T-cell (primary cell): ENCODE measurements at regions of chr12 and their contacts with region 1.

Region 1: GRCh38 chr12:115335594-115335993 is 651.6 kb upstream of the TBX3 start:
- DNase-seq: no peak
- ATAC-seq: no peak
- H3K4me3 ChIP-seq: no peak overlapping the region
- H3K4me3 Mint-ChIP-seq: no peak overlapping the region
- H3K27ac ChIP-seq: no peak overlapping the region
- H3K27ac Mint-ChIP-seq: no peak overlapping the region
- H3K4me1 ChIP-seq: no peaks in the 10 kb centered on the region
- H3K4me1 Mint-ChIP-seq: no peaks in the 10 kb centered on the region
- H3K27me3 ChIP-seq: no peaks in the 10 kb centered on the region
- H3K27me3 Mint-ChIP-seq: peaks cover 4% of the 10 kb centered on the region in 2 donors

Region 2: GRCh38 chr12:115351221-115352077 is 15.9 kb after region 1 on chr12:
- CTCF ChIA-PET with region 1: no interaction called
- POLR2A ChIA-PET with region 1: no interaction called
- DNase-seq: no peak
- ATAC-seq: no peak
- H3K4me3 ChIP-seq: no peak overlapping the region
- H3K4me3 Mint-ChIP-seq: no peak overlapping the region
- H3K27ac ChIP-seq: no peak overlapping the region
- H3K27ac Mint-ChIP-seq: no peak overlapping the region
- H3K4me1 ChIP-seq: no peaks in the 10 kb centered on the region
- H3K4me1 Mint-ChIP-seq: no peaks in the 10 kb centered on the region
- H3K27me3 ChIP-seq: no peaks in the 10 kb centered on the region
- H3K27me3 Mint-ChIP-seq: no peaks in the 10 kb centered on the region

Region 3: GRCh38 chr12:115404761-115405470 is 69.3 kb after region 1 on chr12:
- CTCF ChIA-PET with region 1: no interaction called
- POLR2A ChIA-PET with region 1: no interaction called
- DNase-seq: no peak
- ATAC-seq: no peak
- H3K4me3 ChIP-seq: no peak overlapping the region
- H3K4me3 Mint-ChIP-seq: no peak overlapping the region
- H3K27ac ChIP-seq: no peak overlapping the region
- H3K27ac Mint-ChIP-seq: no peak overlapping the region
- H3K4me1 ChIP-seq: no peaks in the 10 kb centered on the region
- H3K4me1 Mint-ChIP-seq: no peaks in the 10 kb centered on the region
- H3K27me3 ChIP-seq: no peaks in the 10 kb centered on the region
- H3K27me3 Mint-ChIP-seq: no peaks in the 10 kb centered on the region

Region 4: GRCh38 chr12:115481141-115481540 is 145.5 kb after region 1 on chr12:
- CTCF ChIA-PET with region 1: interaction called in 1 of 2 experiments, 15 read pairs
- POLR2A ChIA-PET with region 1: no interaction called
- DNase-seq: no peak
- ATAC-seq: no peak
- H3K4me3 ChIP-seq: no peak overlapping the region
- H3K4me3 Mint-ChIP-seq: no peak overlapping the region
- H3K27ac ChIP-seq: no peak overlapping the region
- H3K27ac Mint-ChIP-seq: no peak overlapping the region
- H3K4me1 ChIP-seq: no peaks in the 10 kb centered on the region
- H3K4me1 Mint-ChIP-seq: no peaks in the 10 kb centered on the region
- H3K27me3 ChIP-seq: no peaks in the 10 kb centered on the region
- H3K27me3 Mint-ChIP-seq: no peaks in the 10 kb centered on the region